ENCODE measurements at regions of chr7 and their contacts with region 1.

Region 1: GRCh38 chr7:142853739-142854371 is 1.0 kb upstream of the EPHB6 start:
- DNase-seq: peak; percentile 76
- ATAC-seq: peak; percentile 88
- H3K4me3 Mint-ChIP-seq: peak overlapping the region; percentile 97
- H3K27ac Mint-ChIP-seq: peak overlapping the region; percentile 95
- H3K4me1 Mint-ChIP-seq: peaks cover 27% of the 10 kb centered on the region
- H3K27me3 Mint-ChIP-seq: no peaks in the 10 kb centered on the region
- CTCF ChIP-seq: peak; percentile 61

Region 2: GRCh38 chr7:141973673-141974072 is 880.2 kb before region 1 on chr7 and contains the start of gene TAS2R38:
- CTCF ChIA-PET with region 1: no interaction called
- POLR2A ChIA-PET with region 1: no interaction called
- intact Hi-C with region 1: no loop called
- DNase-seq: no peak
- ATAC-seq: no peak
- H3K4me3 Mint-ChIP-seq: no peak within 1 kb of the TSS
- H3K27ac Mint-ChIP-seq: no peak within 1 kb of the TSS
- H3K4me1 Mint-ChIP-seq: peaks cover 19% of the 10 kb centered on the region
- H3K27me3 Mint-ChIP-seq: no peaks in the 10 kb centered on the region
- CTCF ChIP-seq: no peak
- total RNA-seq, gene TAS2R38: not detected in 2 replicates

Region 3: DNA sequence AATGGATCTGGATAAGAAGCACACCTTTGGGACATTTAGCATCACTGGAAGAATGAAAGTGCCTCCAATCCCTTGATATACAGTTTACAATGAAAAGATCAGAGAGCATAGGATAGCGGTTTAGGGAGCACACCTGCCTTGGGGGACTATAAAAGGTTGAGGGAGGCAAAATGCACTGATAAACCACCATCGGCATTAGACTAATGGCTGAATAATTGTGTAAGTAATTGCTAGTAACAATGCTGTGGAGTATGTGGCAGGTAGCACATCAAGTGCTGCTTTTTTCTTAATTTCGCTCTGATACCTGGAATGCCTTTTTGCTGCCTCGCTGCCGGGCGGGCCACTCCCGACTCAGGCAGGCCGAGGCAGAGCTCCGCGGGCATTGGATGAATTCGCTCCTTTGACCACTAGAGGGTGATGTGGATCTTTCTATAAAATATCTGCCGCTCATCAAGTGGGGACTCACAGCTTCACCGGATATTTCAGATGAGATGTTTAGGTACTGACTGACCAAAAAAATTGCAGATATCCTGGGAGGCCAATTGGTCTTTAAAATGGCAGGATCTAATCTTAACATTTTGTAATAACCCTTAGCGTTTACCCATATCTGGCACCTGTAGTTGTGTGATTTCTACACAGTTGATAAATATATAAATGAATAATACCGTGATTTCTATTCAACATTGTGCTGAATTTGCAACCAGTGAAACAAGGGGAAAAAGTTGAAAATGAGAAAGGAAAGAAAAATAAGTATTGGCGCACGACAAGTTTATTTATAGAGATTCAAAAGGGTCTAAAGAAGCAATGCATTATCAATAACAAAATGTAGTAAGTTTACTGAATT is 221.3 kb before region 1 on chr7:
- CTCF ChIA-PET with region 1: interaction called, 4 read pairs
- POLR2A ChIA-PET with region 1: interaction called, 6 read pairs
- intact Hi-C with region 1: loop called (anchors 1 kb)
- DNase-seq: peak; percentile 44
- ATAC-seq: peak; percentile 97
- H3K4me3 Mint-ChIP-seq: no peak overlapping the region
- H3K27ac Mint-ChIP-seq: no peak overlapping the region
- H3K4me1 Mint-ChIP-seq: peaks cover 2% of the 10 kb centered on the region
- H3K27me3 Mint-ChIP-seq: peaks cover 16% of the 10 kb centered on the region
- CTCF ChIP-seq: peak; percentile 89

Region 4: DNA sequence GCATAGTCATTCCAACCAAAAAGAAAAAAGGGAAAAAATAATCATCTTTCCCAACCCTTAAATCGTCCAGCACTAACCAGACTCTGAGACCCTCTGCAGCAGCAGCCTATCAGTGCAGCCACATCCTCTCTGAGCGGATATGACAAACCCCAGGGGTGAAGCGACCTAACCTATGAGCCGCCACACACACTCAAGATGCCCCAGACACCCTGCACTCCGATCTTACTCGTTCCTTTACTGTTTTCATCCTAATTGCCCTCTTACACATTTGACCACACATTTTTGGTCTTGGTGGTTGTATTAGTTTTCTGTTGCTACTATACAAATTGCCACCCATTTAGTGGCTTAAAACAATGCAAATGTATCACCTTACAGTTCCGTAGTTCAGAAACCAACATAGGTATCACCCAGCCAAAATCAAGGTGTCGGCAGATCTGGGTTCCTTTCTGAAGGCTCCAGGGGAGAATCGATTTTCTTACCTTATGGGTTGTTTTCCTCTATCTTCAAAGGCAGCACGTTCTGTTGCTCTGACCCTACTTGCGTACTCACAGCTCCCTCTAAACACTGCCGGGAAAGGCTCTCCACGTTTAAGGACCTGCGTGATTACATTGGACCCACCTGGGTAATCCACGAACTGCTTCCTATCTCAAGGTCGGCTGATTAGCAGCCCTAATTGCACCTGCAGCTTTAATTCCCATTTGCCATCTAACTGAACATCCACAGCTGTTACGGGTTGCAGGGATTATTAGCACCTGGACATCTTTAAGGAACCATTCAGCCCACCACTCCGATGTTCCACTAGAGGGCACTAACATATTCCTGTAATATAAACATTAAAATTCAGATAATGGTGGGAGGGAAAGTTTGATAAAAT is 141.9 kb before region 1 on chr7:
- CTCF ChIA-PET with region 1: interaction called, 7 read pairs
- POLR2A ChIA-PET with region 1: interaction called, 5 read pairs
- intact Hi-C with region 1: loop called (anchors 1 kb)
- DNase-seq: no peak
- ATAC-seq: peak; percentile 25
- H3K4me3 Mint-ChIP-seq: peak overlapping the region; percentile 63
- H3K27ac Mint-ChIP-seq: no peak overlapping the region
- H3K4me1 Mint-ChIP-seq: peaks cover 27% of the 10 kb centered on the region
- H3K27me3 Mint-ChIP-seq: no peaks in the 10 kb centered on the region
- CTCF ChIP-seq: no peak

Region 5: DNA sequence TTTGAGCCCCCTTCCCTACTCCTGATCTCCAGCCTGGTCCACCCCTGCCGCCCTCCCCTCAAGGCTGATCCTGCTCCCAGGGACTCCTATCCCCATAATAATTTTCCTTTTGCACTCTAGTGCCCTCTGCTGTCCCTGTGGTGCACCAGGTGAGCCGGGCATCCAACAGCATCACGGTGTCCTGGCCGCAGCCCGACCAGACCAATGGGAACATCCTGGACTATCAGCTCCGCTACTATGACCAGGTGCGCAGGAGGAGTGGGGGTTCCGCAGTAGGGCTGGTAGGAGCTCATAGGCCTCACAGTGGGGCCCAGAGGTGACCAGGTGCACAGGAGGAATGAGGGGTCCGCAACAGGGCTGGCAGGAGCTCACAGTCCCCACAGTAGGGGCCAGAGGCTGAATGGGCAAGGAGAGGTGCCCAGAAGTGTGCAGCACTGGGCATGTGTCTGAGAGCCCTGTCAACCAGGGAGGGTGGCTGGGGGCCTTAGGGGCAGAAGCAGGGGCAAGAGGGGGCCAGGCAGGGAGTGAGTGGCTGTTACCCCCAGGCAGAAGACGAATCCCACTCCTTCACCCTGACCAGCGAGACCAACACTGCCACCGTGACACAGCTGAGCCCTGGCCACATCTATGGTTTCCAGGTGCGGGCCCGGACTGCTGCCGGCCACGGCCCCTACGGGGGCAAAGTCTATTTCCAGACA is 12.7 kb after region 1 on chr7:
- CTCF ChIA-PET with region 1: interaction called, 15 read pairs
- POLR2A ChIA-PET with region 1: interaction called, 3 read pairs
- intact Hi-C with region 1: loop called (anchors 1 kb)
- DNase-seq: no peak
- ATAC-seq: peak; percentile 34
- H3K4me3 Mint-ChIP-seq: no peak overlapping the region
- H3K27ac Mint-ChIP-seq: no peak overlapping the region
- H3K4me1 Mint-ChIP-seq: no peaks in the 10 kb centered on the region
- H3K27me3 Mint-ChIP-seq: no peaks in the 10 kb centered on the region
- CTCF ChIP-seq: no peak

Region 6: DNA sequence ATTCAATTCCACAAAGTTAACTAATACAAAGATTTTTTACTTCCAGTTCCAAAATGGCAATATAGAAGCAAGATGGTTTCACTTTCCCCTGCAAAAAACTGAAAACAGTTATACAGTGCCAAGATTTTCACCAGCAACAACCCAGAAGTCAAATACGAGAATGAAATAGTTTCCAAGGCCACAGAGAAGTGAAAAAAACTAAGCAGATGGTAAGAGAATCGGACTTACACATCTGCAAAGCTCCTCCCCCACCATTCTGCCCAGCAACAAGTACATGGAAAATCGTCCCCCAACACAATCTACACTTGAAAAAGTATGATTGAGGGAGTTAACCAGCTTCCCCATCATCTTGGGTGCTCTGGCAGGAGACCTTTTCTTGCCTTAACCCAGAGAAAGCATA is 138.6 kb after region 1 on chr7:
- CTCF ChIA-PET with region 1: no interaction called
- POLR2A ChIA-PET with region 1: no interaction called
- intact Hi-C with region 1: no loop called
- DNase-seq: no peak
- ATAC-seq: no peak
- H3K4me3 Mint-ChIP-seq: no peak overlapping the region
- H3K27ac Mint-ChIP-seq: no peak overlapping the region
- H3K4me1 Mint-ChIP-seq: peaks cover 7% of the 10 kb centered on the region
- H3K27me3 Mint-ChIP-seq: peaks cover 11% of the 10 kb centered on the region
- CTCF ChIP-seq: no peak

Region 7: GRCh38 chr7:143214789-143215679 is 361.2 kb after region 1 on chr7:
- CTCF ChIA-PET with region 1: interaction called, 6 read pairs
- POLR2A ChIA-PET with region 1: no interaction called
- intact Hi-C with region 1: loop called (anchors 1 kb)
- DNase-seq: no peak
- ATAC-seq: peak; percentile 97
- H3K4me3 Mint-ChIP-seq: no peak overlapping the region
- H3K27ac Mint-ChIP-seq: no peak overlapping the region
- H3K4me1 Mint-ChIP-seq: peaks cover 16% of the 10 kb centered on the region
- H3K27me3 Mint-ChIP-seq: peaks cover 2% of the 10 kb centered on the region
- CTCF ChIP-seq: peak; percentile 99

Region 8: GRCh38 chr7:143846692-143847091 is 992.8 kb after region 1 on chr7:
- CTCF ChIA-PET with region 1: no interaction called
- POLR2A ChIA-PET with region 1: no interaction called
- intact Hi-C with region 1: no loop called
- DNase-seq: no peak
- ATAC-seq: no peak
- H3K4me3 Mint-ChIP-seq: no peak overlapping the region
- H3K27ac Mint-ChIP-seq: no peak overlapping the region
- H3K4me1 Mint-ChIP-seq: no peaks in the 10 kb centered on the region
- H3K27me3 Mint-ChIP-seq: no peaks in the 10 kb centered on the region
- CTCF ChIP-seq: no peak

Region 9: GRCh38 chr7:144713850-144714249 is 1860.0 kb after region 1 on chr7:
- CTCF ChIA-PET with region 1: no interaction called
- POLR2A ChIA-PET with region 1: interaction called, 11 read pairs
- intact Hi-C with region 1: no loop called
- DNase-seq: no peak
- ATAC-seq: no peak
- H3K4me3 Mint-ChIP-seq: no peak overlapping the region
- H3K27ac Mint-ChIP-seq: no peak overlapping the region
- H3K4me1 Mint-ChIP-seq: no peaks in the 10 kb centered on the region
- H3K27me3 Mint-ChIP-seq: no peaks in the 10 kb centered on the region
- CTCF ChIP-seq: no peak